OCI-LY7 (cell line): ENCODE measurements at regions of chrX and their contacts with region 1.

Region 1: DNA sequence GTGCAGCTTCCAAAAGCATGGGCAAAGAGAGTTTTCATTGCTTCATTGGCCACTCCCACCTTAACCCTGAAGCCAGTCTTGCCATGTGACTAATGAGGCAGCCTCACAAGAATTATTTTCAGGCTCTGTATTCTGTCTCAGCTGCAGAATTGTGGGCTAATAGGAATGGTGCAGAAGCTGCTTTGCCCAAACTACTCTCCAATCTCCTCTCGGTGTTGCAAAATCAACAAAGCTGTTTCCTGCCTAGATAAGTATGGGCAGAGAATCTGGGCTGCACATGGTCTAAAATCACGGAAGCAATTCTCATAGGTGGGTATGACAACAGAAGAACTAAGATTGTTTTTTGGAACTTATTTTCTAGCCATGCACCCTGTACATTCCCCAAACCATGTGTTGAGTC is 31.4 kb downstream of the PPP1R2C start:
- DNase-seq: no peak
- H3K4me3 ChIP-seq: no peak overlapping the region
- H3K27ac ChIP-seq: no peak overlapping the region
- H3K4me1 ChIP-seq: no peaks in the 10 kb centered on the region
- CTCF ChIP-seq: no peak

Region 2: GRCh38 chrX:42680666-42681065 is 65.9 kb before region 1 on chrX:
- CTCF ChIA-PET with region 1: no interaction called
- POLR2A ChIA-PET with region 1: no interaction called
- intact Hi-C with region 1: no loop called
- DNase-seq: peak; percentile 27
- H3K4me3 ChIP-seq: no peak overlapping the region
- H3K27ac ChIP-seq: no peak overlapping the region
- H3K4me1 ChIP-seq: peaks cover 7% of the 10 kb centered on the region
- CTCF ChIP-seq: peak; percentile 26; the same call in 1 of the 2 replicates

Region 3: DNA sequence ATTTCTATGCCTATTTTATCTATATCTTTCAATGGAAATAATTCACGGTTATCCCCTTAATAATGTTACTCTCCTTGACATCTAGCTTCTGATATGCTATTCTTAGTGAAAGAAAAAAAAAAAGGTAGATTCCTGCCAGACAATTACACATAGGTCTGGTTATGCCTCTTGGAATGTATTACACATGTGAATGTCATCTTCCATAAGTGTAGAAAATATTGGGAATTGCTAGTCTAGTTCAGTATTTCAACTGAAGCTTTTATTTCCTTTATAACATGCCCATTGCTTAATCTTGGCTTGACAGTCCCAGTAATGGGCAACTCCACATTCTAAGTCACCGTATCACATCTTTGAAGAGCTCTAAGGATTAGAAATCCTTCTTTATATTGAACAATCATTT is 56.7 kb after region 1 on chrX:
- CTCF ChIA-PET with region 1: no interaction called
- POLR2A ChIA-PET with region 1: no interaction called
- intact Hi-C with region 1: no loop called
- DNase-seq: no peak
- H3K4me3 ChIP-seq: no peak overlapping the region
- H3K27ac ChIP-seq: no peak overlapping the region
- H3K4me1 ChIP-seq: no peaks in the 10 kb centered on the region
- CTCF ChIP-seq: no peak

Region 4: DNA sequence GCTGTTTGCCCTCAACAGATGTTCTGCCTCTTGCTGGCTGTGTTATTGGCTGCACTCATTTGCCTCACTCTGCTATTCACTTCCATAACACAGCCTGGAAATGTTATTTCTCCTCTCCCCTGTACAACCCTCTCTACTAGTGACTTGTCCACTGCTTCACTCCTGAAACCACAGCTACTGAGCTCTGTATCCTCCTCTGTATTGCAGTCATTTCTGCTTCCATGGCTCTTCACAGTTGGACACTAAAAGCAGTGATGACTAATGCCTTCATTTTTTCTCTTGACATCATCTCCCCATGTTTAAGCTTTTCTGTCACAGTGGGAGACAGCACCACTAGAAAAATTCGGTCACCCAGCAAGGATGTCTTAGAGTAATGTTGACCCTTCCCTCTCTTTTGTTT is 154.3 kb after region 1 on chrX:
- CTCF ChIA-PET with region 1: no interaction called
- POLR2A ChIA-PET with region 1: interaction called, 11 read pairs
- intact Hi-C with region 1: no loop called
- DNase-seq: no peak
- H3K4me3 ChIP-seq: no peak overlapping the region
- H3K27ac ChIP-seq: no peak overlapping the region
- H3K4me1 ChIP-seq: no peaks in the 10 kb centered on the region
- CTCF ChIP-seq: no peak